Dendritic cell treated with granulocyte-macrophage colony-stimulating factor and Interleukin-4, amounts not matched to agents 40 ng/mL and 50 ng/mL, for 4 days (primary cell): ENCODE measurements at regions of chr6 and their contacts with region 1.

Region 1: GRCh38 chr6:151263967-151264366 is 24.2 kb downstream of the AKAP12 start:
- H3K4me3 Mint-ChIP-seq: no peak overlapping the region
- H3K27ac Mint-ChIP-seq: no peak overlapping the region
- H3K4me1 Mint-ChIP-seq: no peaks in the 10 kb centered on the region
- H3K27me3 Mint-ChIP-seq: peaks cover 7% of the 10 kb centered on the region

Region 2: DNA sequence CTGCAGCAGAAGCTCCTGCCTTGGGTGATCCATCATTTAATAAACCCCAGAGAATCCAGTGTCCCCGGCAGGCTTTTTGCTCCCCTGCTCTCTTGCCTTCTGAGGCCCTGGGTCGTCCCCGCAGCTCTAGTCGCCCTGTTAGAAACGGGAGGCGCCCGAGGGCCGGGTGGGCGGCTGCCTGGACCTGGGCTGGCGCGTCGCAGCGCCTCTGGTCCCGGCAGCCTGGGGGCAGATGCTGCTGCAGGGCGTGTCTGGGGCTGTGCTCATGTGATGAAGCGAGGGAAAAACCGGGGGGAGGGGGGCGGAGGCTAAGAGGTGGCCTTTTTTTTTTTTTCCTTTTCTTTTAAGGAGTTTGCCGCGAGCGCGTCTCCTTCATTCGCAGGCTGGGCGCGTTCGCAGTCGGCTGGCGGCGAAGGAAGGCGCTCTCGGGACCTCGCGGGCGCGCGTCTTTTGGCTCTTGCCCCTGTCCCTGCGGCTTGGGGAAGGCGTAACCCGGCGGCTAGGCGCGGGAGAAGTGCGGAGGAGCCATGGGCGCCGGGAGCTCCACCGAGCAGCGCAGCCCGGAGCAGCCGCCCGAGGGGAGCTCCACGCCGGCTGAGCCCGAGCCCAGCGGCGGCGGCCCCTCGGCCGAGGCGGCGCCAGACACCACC is 23.8 kb before region 1 on chr6:
- intact Hi-C with region 1: loop called (anchors 1 kb)
- H3K4me3 Mint-ChIP-seq: peak overlapping the region; percentile 70
- H3K27ac Mint-ChIP-seq: no peak overlapping the region
- H3K4me1 Mint-ChIP-seq: no peaks in the 10 kb centered on the region
- H3K27me3 Mint-ChIP-seq: peaks cover 74% of the 10 kb centered on the region